Activated T-helper 1 cell treated with anti-CD3 and anti-CD28 coated beads, Interleukin-12 subunit alpha, Interleukin-12 subunit beta, Interleukin-2, Interleukin-4 antibody, amounts not matched to agents 30 ng/mL and 10 ng/mL and 1 ng/mL, durations not matched to agents 14 hours and 24 hours and 36 hours (primary cell): ENCODE measurements at regions of chrX and their contacts with region 1.

Region 1: GRCh38 chrX:18425199-18426003 is at the start of gene CDKL5:
- DNase-seq: peak; percentile 91
- H3K4me3 Mint-ChIP-seq: peak within 1 kb of the TSS; percentile 86
- H3K27ac Mint-ChIP-seq: no peak within 1 kb of the TSS
- H3K4me1 Mint-ChIP-seq: peaks cover 13% of the 10 kb centered on the region
- H3K27me3 Mint-ChIP-seq: peaks cover 9% of the 10 kb centered on the region
- total RNA-seq, gene CDKL5: 0.69 and 0.73 TPM in 2 replicates

Region 2: GRCh38 chrX:16786139-16786790 is 1639.1 kb before region 1 on chrX and contains the start of gene TXLNG:
- intact Hi-C with region 1: loop called (anchors 5 kb)
- DNase-seq: peak; percentile 91
- H3K4me3 Mint-ChIP-seq: peak within 1 kb of the TSS; percentile 92
- H3K27ac Mint-ChIP-seq: peak within 1 kb of the TSS; percentile 94
- H3K4me1 Mint-ChIP-seq: peaks cover 11% of the 10 kb centered on the region
- H3K27me3 Mint-ChIP-seq: no peaks in the 10 kb centered on the region
- total RNA-seq, gene TXLNG: 23.8 and 25.4 TPM in 2 replicates

Region 3: GRCh38 chrX:18354369-18355223 is 70.8 kb before region 1 on chrX and contains the start of gene SCML2:
- intact Hi-C with region 1: loop called (anchors 2 kb)
- DNase-seq: peak; percentile 27
- H3K4me3 Mint-ChIP-seq: peak within 1 kb of the TSS; percentile 73
- H3K27ac Mint-ChIP-seq: no peak within 1 kb of the TSS
- H3K4me1 Mint-ChIP-seq: no peaks in the 10 kb centered on the region
- H3K27me3 Mint-ChIP-seq: peaks cover 28% of the 10 kb centered on the region
- total RNA-seq, gene SCML2: 3.0 and 3.6 TPM in 2 replicates

Region 4: DNA sequence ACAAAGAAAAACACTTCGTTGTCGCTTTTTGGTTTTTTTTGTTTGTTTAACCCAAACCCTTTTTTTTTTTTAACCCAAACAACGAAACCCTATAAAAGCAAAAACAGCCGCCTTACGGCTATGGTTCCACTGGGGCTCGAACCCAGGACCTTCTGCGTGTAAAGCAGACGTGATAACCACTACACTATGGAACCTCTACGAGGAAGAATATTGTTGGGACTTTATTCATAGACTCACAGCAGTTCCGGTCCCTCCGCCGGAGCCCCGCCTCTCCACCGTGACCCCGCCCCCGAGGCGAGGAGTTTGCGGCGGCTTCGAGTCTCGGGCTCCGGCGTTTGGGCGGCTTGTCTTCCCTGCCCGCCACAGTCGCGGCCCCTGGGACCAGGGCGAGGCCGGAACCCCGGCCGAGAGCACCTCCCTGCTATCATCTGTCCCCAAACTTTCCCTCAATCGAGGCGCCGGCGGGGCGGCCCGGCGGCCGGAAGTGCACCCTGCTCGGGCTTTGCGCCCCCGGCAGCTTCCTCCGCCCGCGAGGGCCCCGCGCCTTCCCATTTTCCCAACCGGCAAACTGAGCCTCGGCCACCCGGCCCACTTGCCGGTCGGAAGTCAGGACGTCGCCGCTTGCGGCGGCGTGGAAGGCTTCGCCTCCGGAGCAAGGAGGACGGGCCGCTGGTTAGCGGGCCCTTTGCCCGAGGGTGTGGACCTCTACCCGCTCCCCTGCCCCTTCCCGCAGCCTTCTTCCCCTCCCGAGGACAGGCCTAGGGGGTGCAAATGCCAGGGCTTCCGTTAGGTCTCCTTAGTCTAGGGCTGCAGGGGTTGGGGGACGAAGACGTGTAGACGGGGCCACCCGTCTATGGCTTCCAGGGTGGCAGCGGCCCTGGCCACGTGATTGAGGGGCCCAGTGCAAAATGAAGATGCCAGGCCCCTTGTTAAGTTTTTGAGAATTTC is 249.7 kb after region 1 on chrX:
- intact Hi-C with region 1: loop called (anchors 2 kb)
- DNase-seq: peak; percentile 75
- H3K4me3 Mint-ChIP-seq: peak overlapping the region; percentile 74
- H3K27ac Mint-ChIP-seq: peak overlapping the region; percentile 52
- H3K4me1 Mint-ChIP-seq: no peaks in the 10 kb centered on the region
- H3K27me3 Mint-ChIP-seq: no peaks in the 10 kb centered on the region

Region 5: DNA sequence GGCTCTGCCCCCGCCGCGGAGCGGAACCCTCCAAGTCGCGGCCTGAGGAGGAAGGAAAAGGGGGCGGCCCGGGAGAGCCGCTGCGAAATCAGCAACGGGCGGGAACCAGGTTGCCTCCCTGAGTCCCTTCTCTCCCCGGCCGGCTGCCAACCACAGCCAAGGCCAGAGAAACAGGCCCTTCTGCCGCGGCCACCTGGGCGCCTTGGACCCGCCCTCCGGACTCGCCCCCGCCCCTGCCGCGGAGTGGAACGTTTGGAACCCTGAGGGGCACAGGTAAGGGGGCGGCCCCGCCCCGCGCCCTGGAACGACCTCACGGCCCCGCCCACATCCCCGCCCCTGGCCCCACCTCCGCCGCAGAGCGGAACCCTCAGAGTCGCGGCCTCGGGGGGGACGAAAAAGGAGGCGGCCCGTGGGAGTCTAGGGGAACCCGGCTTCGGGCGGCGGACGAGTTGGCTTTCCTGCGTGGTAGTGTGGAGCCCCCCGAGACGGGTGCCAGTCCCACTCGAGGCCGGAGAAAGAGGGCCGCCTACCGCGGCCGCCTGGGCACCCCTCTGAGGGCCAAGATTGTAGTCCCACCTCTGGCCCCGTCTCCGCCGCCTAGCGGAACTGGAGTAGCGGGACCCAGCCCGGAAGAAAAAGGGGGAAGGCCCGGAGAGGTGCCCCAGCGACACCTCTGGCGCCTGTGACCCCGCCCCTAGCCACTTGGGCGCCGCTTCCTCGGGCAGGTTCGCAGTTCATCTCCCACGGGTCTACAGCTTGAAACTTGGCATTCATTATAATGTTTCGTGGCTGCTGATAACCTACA is 559.2 kb after region 1 on chrX:
- intact Hi-C with region 1: loop called (anchors 1 kb)
- DNase-seq: peak; percentile 74
- H3K4me3 Mint-ChIP-seq: peak overlapping the region; percentile 85
- H3K27ac Mint-ChIP-seq: peak overlapping the region; percentile 87
- H3K4me1 Mint-ChIP-seq: peaks cover 6% of the 10 kb centered on the region
- H3K27me3 Mint-ChIP-seq: no peaks in the 10 kb centered on the region

Region 6: GRCh38 chrX:19343535-19344408 is 918.4 kb after region 1 on chrX and contains the start of gene PDHA1:
- intact Hi-C with region 1: loop called (anchors 1 kb)
- DNase-seq: peak; percentile 90
- H3K4me3 Mint-ChIP-seq: peak within 1 kb of the TSS; percentile 90
- H3K27ac Mint-ChIP-seq: peak within 1 kb of the TSS; percentile 90
- H3K4me1 Mint-ChIP-seq: peaks cover 13% of the 10 kb centered on the region
- H3K27me3 Mint-ChIP-seq: peaks cover 2% of the 10 kb centered on the region
- total RNA-seq, gene PDHA1: 213 and 218 TPM in 2 replicates

Region 7: GRCh38 chrX:20141281-20142220 is 1716.2 kb after region 1 on chrX and contains the start of gene EIF1AX:
- intact Hi-C with region 1: loop called (anchors 2 kb)
- DNase-seq: peak; percentile 93
- H3K4me3 Mint-ChIP-seq: peak within 1 kb of the TSS; percentile 90
- H3K27ac Mint-ChIP-seq: peak within 1 kb of the TSS; percentile 84
- H3K4me1 Mint-ChIP-seq: peaks cover 29% of the 10 kb centered on the region
- H3K27me3 Mint-ChIP-seq: no peaks in the 10 kb centered on the region
- total RNA-seq, gene EIF1AX: 107 TPM in 2 replicates